ENCODE measurements at regions of chr7 and their contacts with region 1.

Region 1: GRCh38 chr7:83655951-83656556 is 7.1 kb upstream of the SEMA3E start:
- DNase-seq: no peak
- ATAC-seq: peak in 1 of 8 donors; percentile 41
- H3K4me3 ChIP-seq: no peak overlapping the region
- H3K27ac ChIP-seq: no peak overlapping the region
- H3K4me1 ChIP-seq: no peaks in the 10 kb centered on the region
- H3K27me3 ChIP-seq: peaks cover 0 to 7% (median 0%) of the 10 kb centered on the region in 7 donors
- CTCF ChIP-seq: peak in 8 of 9 donors; percentile 31 to 74 (median 60)

Region 2: DNA sequence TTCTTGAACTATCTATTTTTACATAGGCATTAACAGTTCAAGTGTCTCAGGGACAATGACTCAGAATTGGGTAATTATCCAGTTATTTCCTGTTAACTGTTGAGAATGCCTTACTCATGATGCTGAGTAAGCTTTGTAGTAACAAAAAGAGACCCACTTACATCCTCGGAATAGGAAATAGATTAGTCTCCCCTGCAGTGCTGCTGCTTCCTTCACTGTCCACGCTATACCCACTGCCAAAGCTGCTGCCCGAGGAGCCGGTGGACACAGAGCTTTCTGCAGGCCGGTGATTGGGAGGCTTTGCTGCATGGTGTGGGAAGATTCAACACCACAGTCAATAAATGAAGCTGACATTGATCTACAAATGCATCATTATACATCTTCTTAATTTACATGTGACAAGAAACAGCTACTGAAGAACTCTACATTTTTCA is 850.5 kb before region 1 on chr7:
- intact Hi-C with region 1: loop called in 2 of 10 experiments (anchors 10 kb)
- DNase-seq: no peak
- ATAC-seq: peak in 1 of 8 donors; percentile 41
- H3K4me3 ChIP-seq: no peak overlapping the region
- H3K27ac ChIP-seq: no peak overlapping the region
- H3K4me1 ChIP-seq: no peaks in the 10 kb centered on the region
- H3K27me3 ChIP-seq: no peaks in the 10 kb centered on the region
- CTCF ChIP-seq: no peak

Region 3: GRCh38 chr7:82810558-82811259 is 845.3 kb before region 1 on chr7:
- intact Hi-C with region 1: loop called in 2 of 10 experiments (anchors 10 kb)
- DNase-seq: no peak
- ATAC-seq: peak in 2 of 8 donors; percentile 52 to 55
- H3K4me3 ChIP-seq: no peak overlapping the region
- H3K27ac ChIP-seq: no peak overlapping the region
- H3K4me1 ChIP-seq: no peaks in the 10 kb centered on the region
- H3K27me3 ChIP-seq: no peaks in the 10 kb centered on the region
- CTCF ChIP-seq: peak in 8 of 9 donors; percentile 9 to 71 (median 58)

Region 4: GRCh38 chr7:83410989-83411591 is 245.0 kb before region 1 on chr7:
- intact Hi-C with region 1: loop called in 9 of 10 experiments (anchors 2 to 10 kb)
- DNase-seq: no peak
- ATAC-seq: no peak
- H3K4me3 ChIP-seq: no peak overlapping the region
- H3K27ac ChIP-seq: no peak overlapping the region
- H3K4me1 ChIP-seq: no peaks in the 10 kb centered on the region
- H3K27me3 ChIP-seq: peaks cover 0 to 9% (median 0%) of the 10 kb centered on the region in 7 donors
- CTCF ChIP-seq: peak; percentile 27 to 69 (median 56)

Region 5: GRCh38 chr7:83427929-83428328 is 228.1 kb before region 1 on chr7:
- intact Hi-C with region 1: loop called in 1 of 10 experiments (anchors 10 kb)
- DNase-seq: no peak
- ATAC-seq: no peak
- H3K4me3 ChIP-seq: no peak overlapping the region
- H3K27ac ChIP-seq: no peak overlapping the region
- H3K4me1 ChIP-seq: no peaks in the 10 kb centered on the region
- H3K27me3 ChIP-seq: no peaks in the 10 kb centered on the region
- CTCF ChIP-seq: no peak

Region 6: DNA sequence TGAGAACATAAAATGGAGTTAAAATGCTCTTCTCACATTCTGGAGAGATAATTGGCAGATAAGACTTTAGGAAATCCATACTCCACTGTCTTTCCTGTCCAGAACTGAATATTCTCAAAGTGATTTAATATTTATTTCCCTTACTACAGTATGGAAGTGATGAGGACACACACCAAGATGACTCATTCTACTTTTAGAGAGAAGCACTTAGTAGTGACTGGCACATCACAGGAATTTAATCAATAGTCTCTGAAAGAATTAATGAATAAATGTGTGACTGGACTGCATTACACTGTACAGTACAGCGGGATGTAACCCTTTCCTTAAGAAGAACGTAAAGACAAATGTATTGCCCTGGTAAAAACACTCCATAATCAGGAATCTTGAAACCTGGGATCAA is 123.8 kb before region 1 on chr7:
- intact Hi-C with region 1: no loop called
- DNase-seq: no peak
- ATAC-seq: no peak
- H3K4me3 ChIP-seq: no peak overlapping the region
- H3K27ac ChIP-seq: no peak overlapping the region
- H3K4me1 ChIP-seq: no peaks in the 10 kb centered on the region
- H3K27me3 ChIP-seq: no peaks in the 10 kb centered on the region
- CTCF ChIP-seq: no peak

Region 7: GRCh38 chr7:83947260-83947659 is 291.2 kb after region 1 on chr7:
- intact Hi-C with region 1: no loop called
- DNase-seq: no peak
- ATAC-seq: no peak
- H3K4me3 ChIP-seq: no peak overlapping the region
- H3K27ac ChIP-seq: no peak overlapping the region
- H3K4me1 ChIP-seq: no peaks in the 10 kb centered on the region
- H3K27me3 ChIP-seq: no peaks in the 10 kb centered on the region
- CTCF ChIP-seq: peak in 3 of 9 donors; percentile 9 to 45 (median 33)